ENCODE measurements at regions of chr17 and their contacts with region 1.

Region 1: DNA sequence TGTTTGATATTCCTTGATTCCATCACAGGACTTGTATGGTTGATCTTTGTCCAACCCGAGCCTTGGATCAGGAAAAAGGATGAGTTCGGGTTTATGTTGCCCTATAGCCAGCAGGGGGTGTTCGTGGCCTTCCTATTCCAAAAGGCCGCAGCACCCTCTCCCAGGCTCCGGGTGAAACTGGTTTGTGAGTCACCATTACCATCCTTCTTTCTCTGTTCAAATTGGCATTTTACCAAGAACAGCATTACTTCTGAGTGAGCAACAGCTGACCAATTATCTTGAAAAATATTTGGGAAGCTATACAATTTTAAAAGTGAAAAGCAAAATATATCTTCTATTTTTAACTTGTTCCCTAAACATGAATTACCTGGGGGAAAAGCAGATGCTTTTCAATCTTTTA is 24.3 kb upstream of the KRT20 start:
- DNase-seq: peak; percentile 86
- H3K4me3 ChIP-seq: no peak overlapping the region
- H3K27ac ChIP-seq: no peak overlapping the region
- H3K4me1 ChIP-seq: peaks cover 6% of the 10 kb centered on the region
- H3K27me3 ChIP-seq: no peaks in the 10 kb centered on the region
- CTCF ChIP-seq: peak; percentile 51 to 81 (median 74)
- POLR2A ChIP-seq: no peak

Region 2: GRCh38 chr17:40980596-40980995 is 71.2 kb after region 1 on chr17:
- intact Hi-C with region 1: no loop called
- DNase-seq: peak; percentile 54
- H3K4me3 ChIP-seq: no peak overlapping the region
- H3K27ac ChIP-seq: peak overlapping the region; percentile 35 to 60
- H3K4me1 ChIP-seq: peaks cover 13% of the 10 kb centered on the region
- H3K27me3 ChIP-seq: no peaks in the 10 kb centered on the region
- CTCF ChIP-seq: no peak
- POLR2A ChIP-seq: no peak

Region 3: GRCh38 chr17:41322094-41322902 is 412.9 kb after region 1 on chr17:
- intact Hi-C with region 1: loop called (anchors 10 kb)
- DNase-seq: peak; percentile 36
- H3K4me3 ChIP-seq: no peak overlapping the region
- H3K27ac ChIP-seq: no peak overlapping the region
- H3K4me1 ChIP-seq: no peaks in the 10 kb centered on the region
- H3K27me3 ChIP-seq: no peaks in the 10 kb centered on the region
- CTCF ChIP-seq: peak; percentile 62 to 81 (median 80)
- POLR2A ChIP-seq: no peak

Measured in testis (tissue), 5 donors.